ENCODE measurements at regions of chr2 and their contacts with region 1.

Region 1: DNA sequence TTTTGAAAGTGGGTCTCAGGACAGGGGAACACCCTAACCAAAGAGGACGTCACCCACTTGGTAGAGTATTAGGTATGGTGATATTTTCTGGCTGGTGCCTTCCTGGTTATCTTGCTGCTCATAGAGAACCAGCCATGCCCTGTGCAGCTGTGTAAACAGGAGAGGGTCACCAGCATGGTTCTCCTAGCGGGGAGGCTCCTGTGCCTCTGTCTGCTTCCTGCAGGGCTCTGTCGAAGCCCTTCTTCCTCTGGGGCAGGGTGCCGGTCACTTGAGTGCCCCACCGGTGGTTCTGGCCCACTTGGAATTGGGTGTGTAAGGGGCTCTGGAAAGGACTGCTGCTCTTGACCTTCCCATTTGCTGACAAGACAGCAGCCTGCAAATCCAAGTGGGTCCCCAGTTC is 131.6 kb upstream of the MSH6 start:
- DNase-seq: no peak
- H3K4me3 ChIP-seq: no peak overlapping the region
- H3K27ac ChIP-seq: no peak overlapping the region
- H3K4me1 ChIP-seq: no peaks in the 10 kb centered on the region
- H3K27me3 ChIP-seq: peaks cover 5% of the 10 kb centered on the region
- CTCF ChIP-seq: no peak

Region 2: GRCh38 chr2:47803363-47803762 is 152.1 kb after region 1 on chr2:
- CTCF ChIA-PET with region 1: no interaction called
- POLR2A ChIA-PET with region 1: interaction called, 10 read pairs
- intact Hi-C with region 1: no loop called
- DNase-seq: no peak
- H3K4me3 ChIP-seq: no peak overlapping the region
- H3K27ac ChIP-seq: no peak overlapping the region
- H3K4me1 ChIP-seq: peaks cover 4% of the 10 kb centered on the region
- H3K27me3 ChIP-seq: no peaks in the 10 kb centered on the region
- CTCF ChIP-seq: no peak

Region 3: DNA sequence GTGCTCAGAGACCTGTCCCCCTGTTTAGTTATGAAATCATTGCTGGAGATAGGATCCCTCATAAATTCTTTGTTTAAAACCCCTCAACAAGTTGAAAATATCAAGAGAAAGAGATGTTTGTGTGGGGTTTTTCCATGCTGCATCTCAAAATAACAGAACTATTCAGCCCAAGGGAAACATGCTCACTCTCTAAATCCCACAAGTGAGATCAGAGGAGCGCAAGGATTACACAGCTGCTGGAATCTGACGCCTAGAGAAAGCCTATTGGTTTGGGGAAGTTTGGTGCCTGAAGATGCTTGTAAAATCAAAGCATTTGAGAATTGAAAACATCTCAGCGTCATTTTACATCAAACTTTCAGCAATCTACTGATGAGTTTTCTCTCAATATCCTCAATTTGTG is 1495.1 kb after region 1 on chr2:
- CTCF ChIA-PET with region 1: no interaction called
- POLR2A ChIA-PET with region 1: no interaction called
- intact Hi-C with region 1: no loop called
- DNase-seq: no peak
- H3K4me3 ChIP-seq: no peak overlapping the region
- H3K27ac ChIP-seq: no peak overlapping the region
- H3K4me1 ChIP-seq: no peaks in the 10 kb centered on the region
- H3K27me3 ChIP-seq: no peaks in the 10 kb centered on the region
- CTCF ChIP-seq: no peak